CD8-positive, alpha-beta T cell (primary cell): ENCODE measurements at regions of chr16 and their contacts with region 1.

Region 1: DNA sequence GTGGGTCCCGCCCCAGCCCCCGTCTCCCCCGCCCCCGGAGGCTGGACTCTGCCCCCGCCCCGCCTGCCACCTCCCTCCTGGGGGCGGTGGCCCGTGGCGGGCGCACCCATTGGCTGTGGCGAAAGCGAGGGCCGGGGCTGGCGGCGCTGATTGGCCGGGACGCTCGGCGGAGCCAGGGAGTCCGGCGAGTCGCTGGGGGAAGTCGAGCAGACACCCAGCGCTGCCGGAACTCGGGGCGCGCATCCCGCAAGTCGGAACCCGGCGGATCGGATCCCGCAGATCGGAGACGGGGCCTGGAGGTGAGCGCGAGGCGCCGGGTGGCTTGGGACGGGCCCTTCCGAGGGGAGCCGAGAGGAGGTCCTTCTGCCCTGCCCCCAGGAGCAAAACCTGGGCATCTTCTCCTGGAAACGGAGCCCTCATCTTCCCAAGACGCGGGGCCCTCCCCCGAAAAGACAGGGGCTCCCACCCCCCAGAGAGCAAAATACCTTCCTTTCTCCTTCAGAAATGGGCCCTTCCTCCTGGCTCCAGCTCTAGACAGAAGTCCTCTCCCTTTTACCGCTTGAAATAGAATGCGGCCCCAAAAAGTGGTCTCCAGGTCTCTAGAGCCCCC is at the start of gene ABAT:
- DNase-seq: peak; percentile 74 to 93 (median 88)
- ATAC-seq: peak; percentile 96
- H3K4me3 ChIP-seq: peak within 1 kb of the TSS; percentile 58 to 75
- H3K4me3 Mint-ChIP-seq: peak within 1 kb of the TSS; percentile 89
- H3K27ac ChIP-seq: peak within 1 kb of the TSS in 1 of 2 experiments; percentile 37
- H3K27ac Mint-ChIP-seq: peak within 1 kb of the TSS; percentile 90
- H3K4me1 ChIP-seq: peaks cover 16% of the 10 kb centered on the region
- H3K4me1 Mint-ChIP-seq: peaks cover 19% of the 10 kb centered on the region
- H3K27me3 ChIP-seq: no peaks in the 10 kb centered on the region
- H3K27me3 Mint-ChIP-seq: no peaks in the 10 kb centered on the region
- CTCF ChIP-seq: no peak
- total RNA-seq, gene ABAT: 4.1 to 4.2 TPM

Region 2: DNA sequence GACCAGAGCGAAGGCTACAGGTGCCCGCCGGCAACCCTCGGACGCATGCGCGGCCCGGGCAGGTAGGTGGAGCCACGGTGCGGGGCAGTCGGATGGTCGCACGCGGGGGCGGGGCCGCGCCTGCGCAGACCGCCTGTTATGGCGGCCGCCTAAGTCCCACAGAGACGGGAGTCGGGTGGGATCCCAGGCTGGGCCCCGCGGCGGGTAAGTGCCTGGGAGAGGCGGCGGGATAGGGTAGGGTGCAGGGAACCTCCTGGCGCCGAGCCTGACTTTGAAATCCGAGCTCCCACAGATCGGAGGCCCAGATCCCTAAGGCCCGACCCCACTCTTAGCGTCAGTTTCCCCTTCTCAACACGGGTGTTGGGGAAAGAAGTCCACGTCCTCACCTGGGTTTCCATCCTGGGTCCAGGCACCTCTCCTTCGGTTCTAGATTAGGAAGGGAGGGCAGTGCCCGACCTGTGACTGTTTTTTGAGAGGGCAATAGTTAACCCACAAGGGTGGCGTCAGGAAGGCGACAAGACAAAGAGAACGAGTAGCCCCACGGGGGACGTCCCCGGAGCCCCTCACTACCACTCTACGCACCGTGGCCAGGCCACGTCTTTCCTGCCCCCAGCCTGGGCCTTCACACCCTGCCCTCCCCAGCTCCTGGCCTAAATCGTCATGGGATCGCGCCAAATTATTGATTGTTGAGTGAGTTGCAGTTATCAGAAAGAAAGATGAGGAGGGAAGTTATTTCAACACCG is 52.8 kb before region 1 on chr16 and contains the start of gene METTL22:
- CTCF ChIA-PET with region 1: no interaction called
- POLR2A ChIA-PET with region 1: no interaction called
- intact Hi-C with region 1: loop called (anchors 1 kb)
- DNase-seq: peak; percentile 83 to 96 (median 91)
- ATAC-seq: peak; percentile 98
- H3K4me3 ChIP-seq: peak within 1 kb of the TSS; percentile 90 to 100
- H3K4me3 Mint-ChIP-seq: peak within 1 kb of the TSS; percentile 94
- H3K27ac ChIP-seq: peak within 1 kb of the TSS; percentile 83 to 84
- H3K27ac Mint-ChIP-seq: peak within 1 kb of the TSS; percentile 92
- H3K4me1 ChIP-seq: peaks cover 11% of the 10 kb centered on the region
- H3K4me1 Mint-ChIP-seq: peaks cover 20% of the 10 kb centered on the region
- H3K27me3 ChIP-seq: no peaks in the 10 kb centered on the region
- H3K27me3 Mint-ChIP-seq: no peaks in the 10 kb centered on the region
- CTCF ChIP-seq: no peak
- total RNA-seq, gene METTL22: 30.0 to 30.8 TPM

Region 3: DNA sequence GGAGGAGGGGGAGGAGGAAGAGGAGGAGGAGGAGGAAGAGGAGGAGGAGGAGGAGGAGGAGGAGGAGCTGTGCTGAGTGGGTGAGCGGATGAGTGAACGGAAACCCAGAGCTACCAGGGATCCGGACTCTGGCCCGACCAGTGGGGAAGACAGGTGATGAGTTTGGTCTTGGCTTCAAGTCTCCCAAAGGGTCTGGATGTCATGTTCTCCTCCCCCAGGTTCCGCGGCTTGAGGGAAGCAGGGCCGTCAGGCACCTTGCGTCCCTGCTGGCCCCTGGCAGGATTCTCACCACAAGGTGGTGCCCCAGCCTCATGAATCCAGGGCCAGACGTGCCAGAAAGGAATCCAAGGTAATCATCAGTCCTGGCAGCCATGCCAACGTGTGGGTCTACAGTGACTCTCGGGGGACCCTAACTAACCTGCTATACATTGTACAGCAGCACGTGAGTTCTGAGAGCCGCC is 13.6 kb before region 1 on chr16:
- CTCF ChIA-PET with region 1: no interaction called
- POLR2A ChIA-PET with region 1: no interaction called
- intact Hi-C with region 1: no loop called
- DNase-seq: peak in 8 of 9 experiments; percentile 10 to 56 (median 32)
- ATAC-seq: peak; percentile 58
- H3K4me3 ChIP-seq: no peak overlapping the region
- H3K4me3 Mint-ChIP-seq: no peak overlapping the region
- H3K27ac ChIP-seq: no peak overlapping the region
- H3K27ac Mint-ChIP-seq: no peak overlapping the region
- H3K4me1 ChIP-seq: no peaks in the 10 kb centered on the region
- H3K4me1 Mint-ChIP-seq: no peaks in the 10 kb centered on the region
- H3K27me3 ChIP-seq: no peaks in the 10 kb centered on the region
- H3K27me3 Mint-ChIP-seq: no peaks in the 10 kb centered on the region
- CTCF ChIP-seq: peak; percentile 27

Region 4: DNA sequence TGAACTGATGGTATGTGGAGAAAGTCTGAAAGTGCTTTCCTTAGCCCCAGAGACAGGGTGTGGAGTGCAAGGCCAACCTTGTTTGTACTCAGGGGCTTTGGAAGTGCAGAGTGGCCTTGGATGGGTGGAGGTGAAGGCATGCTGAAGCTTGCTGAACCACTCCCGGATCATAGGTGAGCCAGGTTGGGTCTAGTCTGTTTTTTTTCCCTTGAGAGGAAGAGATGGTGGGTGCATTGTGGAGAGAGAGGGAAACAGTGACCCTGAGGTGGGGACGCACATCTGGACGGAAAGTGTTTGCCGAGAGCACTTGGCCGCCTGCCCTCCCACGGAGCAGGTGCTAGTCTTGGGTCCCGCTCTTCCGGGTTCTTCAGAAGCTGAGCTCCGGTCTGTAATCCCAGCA is 12.4 kb after region 1 on chr16:
- CTCF ChIA-PET with region 1: no interaction called
- POLR2A ChIA-PET with region 1: no interaction called
- intact Hi-C with region 1: no loop called
- DNase-seq: no peak
- ATAC-seq: no peak
- H3K4me3 ChIP-seq: no peak overlapping the region
- H3K4me3 Mint-ChIP-seq: no peak overlapping the region
- H3K27ac ChIP-seq: no peak overlapping the region
- H3K27ac Mint-ChIP-seq: no peak overlapping the region
- H3K4me1 ChIP-seq: no peaks in the 10 kb centered on the region
- H3K4me1 Mint-ChIP-seq: no peaks in the 10 kb centered on the region
- H3K27me3 ChIP-seq: no peaks in the 10 kb centered on the region
- H3K27me3 Mint-ChIP-seq: no peaks in the 10 kb centered on the region
- CTCF ChIP-seq: no peak

Region 5: DNA sequence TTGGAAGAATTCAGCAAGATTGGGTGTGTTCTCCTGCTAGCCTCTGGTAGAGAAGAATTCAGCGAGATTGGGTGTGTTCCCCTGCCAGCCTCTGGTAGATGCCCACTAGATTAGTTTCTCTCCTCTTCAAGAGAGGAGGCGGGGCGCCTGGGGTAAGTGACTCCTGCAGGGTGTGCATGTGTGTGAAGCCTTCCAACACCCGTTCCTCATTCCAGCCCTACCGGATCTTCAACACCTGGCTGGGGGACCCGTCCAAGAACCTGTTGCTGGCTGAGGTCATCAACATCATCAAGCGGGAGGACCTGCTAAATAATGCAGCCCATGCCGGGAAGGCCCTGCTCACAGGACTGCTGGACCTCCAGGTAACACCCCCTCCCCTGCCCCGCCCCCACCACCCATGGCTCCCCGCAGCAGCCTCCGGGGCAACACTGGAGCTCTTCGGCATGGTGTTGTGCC is 101.6 kb after region 1 on chr16:
- CTCF ChIA-PET with region 1: no interaction called
- POLR2A ChIA-PET with region 1: no interaction called
- intact Hi-C with region 1: no loop called
- DNase-seq: no peak
- ATAC-seq: no peak
- H3K4me3 ChIP-seq: no peak overlapping the region
- H3K4me3 Mint-ChIP-seq: no peak overlapping the region
- H3K27ac ChIP-seq: no peak overlapping the region
- H3K27ac Mint-ChIP-seq: no peak overlapping the region
- H3K4me1 ChIP-seq: no peaks in the 10 kb centered on the region
- H3K4me1 Mint-ChIP-seq: no peaks in the 10 kb centered on the region
- H3K27me3 ChIP-seq: no peaks in the 10 kb centered on the region
- H3K27me3 Mint-ChIP-seq: no peaks in the 10 kb centered on the region
- CTCF ChIP-seq: no peak

Region 6: DNA sequence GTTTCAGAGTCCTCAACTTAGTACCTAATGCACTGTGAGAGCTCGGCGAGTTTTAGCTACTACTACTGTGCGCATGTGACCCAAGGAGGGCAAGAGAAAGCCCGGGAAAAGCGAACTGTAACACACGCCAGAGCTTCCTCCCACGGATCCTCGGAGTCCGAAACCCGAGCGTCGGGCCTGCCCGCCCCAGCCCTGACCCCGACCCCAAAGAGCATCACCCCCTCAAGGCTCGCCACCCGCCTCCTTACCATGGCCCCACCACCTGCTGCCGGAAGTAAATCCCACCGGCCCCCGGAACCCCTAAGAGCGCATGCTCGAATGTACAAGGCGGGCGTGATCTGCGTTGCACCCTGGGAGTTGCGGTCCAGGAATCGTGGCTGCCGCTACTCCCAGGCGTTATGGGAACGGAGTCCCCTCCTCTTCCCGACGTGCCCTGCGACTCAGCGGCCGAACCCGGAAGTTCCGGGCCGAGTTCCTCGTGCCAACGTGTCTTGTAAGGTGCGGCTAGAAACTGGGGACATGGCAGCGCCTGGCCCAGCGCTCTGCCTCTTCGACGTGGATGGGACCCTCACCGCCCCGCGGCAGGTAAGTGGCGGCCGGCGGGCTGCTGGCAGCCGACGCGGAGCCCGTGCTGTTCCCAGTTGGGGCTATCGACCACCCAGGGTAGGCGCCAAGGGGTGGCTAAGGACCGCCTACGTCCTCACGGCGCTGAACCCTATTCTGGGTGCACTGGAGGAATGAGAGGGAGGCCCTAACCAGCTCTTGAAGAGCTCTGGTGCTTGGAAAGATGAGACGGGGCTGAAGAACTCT is 123.1 kb after region 1 on chr16 and contains the starts of genes PMM2 and TMEM186:
- CTCF ChIA-PET with region 1: no interaction called
- POLR2A ChIA-PET with region 1: no interaction called
- intact Hi-C with region 1: loop called (anchors 1 kb)
- DNase-seq: peak; percentile 87 to 98 (median 95)
- ATAC-seq: peak; percentile 95
- H3K4me3 ChIP-seq: peak within 1 kb of the TSS; percentile 77 to 97
- H3K4me3 Mint-ChIP-seq: peak within 1 kb of the TSS; percentile 95
- H3K27ac ChIP-seq: peak within 1 kb of the TSS; percentile 78 to 81
- H3K27ac Mint-ChIP-seq: peak within 1 kb of the TSS; percentile 93
- H3K4me1 ChIP-seq: peaks cover 34% of the 10 kb centered on the region
- H3K4me1 Mint-ChIP-seq: peaks cover 46% of the 10 kb centered on the region
- H3K27me3 ChIP-seq: no peaks in the 10 kb centered on the region
- H3K27me3 Mint-ChIP-seq: no peaks in the 10 kb centered on the region
- CTCF ChIP-seq: no peak
- total RNA-seq, gene PMM2: 29.6 to 32.7 TPM
- total RNA-seq, gene TMEM186: 2.4 to 2.9 TPM

Region 7: DNA sequence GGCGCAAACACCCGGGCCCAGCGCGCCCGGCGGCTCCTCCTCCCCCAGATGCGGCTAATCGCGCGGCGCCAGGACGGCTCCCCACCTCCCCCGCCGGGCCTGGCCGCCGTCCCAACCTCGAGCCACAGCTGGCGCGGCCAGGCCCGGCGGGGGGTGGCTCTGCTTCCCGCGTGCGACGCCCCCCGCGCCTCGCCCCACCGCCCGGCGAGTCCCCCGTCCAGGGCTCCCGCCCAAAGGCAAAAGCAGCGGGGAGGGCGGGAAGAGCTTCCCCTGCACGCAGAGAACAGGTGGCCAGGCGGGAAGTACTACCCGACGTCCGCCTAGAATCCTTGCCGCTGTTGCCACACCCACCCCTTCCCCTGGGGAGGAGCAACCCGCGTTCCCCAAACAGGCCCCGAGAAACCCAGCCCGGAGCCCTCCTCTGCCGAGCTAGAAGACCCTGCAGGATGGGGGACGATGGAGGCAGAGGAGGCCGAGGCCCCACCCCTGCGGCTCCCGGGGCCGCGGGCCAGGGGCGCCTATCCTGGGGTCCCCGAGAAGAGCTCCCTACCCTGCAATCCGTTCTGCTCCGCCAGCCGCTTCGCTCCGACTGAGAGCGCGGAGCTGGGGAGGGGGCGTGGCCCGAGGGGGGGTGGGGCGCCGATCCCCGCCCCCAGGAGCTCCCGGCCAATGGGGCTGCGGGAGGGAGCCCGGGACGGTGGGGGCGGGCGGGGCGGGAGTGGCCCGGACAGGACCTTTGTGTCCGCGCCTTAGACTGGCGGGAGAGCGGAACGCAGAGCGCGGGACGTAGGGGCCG is 194.1 kb after region 1 on chr16 and contains the start of gene CARHSP1:
- CTCF ChIA-PET with region 1: no interaction called
- POLR2A ChIA-PET with region 1: no interaction called
- intact Hi-C with region 1: loop called (anchors 1 to 2 kb)
- DNase-seq: peak; percentile 55 to 90 (median 75)
- ATAC-seq: peak; percentile 76
- H3K4me3 ChIP-seq: peak within 1 kb of the TSS; percentile 68 to 72
- H3K4me3 Mint-ChIP-seq: peak within 1 kb of the TSS; percentile 97
- H3K27ac ChIP-seq: peak within 1 kb of the TSS; percentile 41 to 52
- H3K27ac Mint-ChIP-seq: peak within 1 kb of the TSS; percentile 93
- H3K4me1 ChIP-seq: peaks cover 53% of the 10 kb centered on the region
- H3K4me1 Mint-ChIP-seq: peaks cover 57% of the 10 kb centered on the region
- H3K27me3 ChIP-seq: no peaks in the 10 kb centered on the region
- H3K27me3 Mint-ChIP-seq: no peaks in the 10 kb centered on the region
- CTCF ChIP-seq: no peak
- total RNA-seq, gene CARHSP1: 28.0 to 33.3 TPM

Region 8: DNA sequence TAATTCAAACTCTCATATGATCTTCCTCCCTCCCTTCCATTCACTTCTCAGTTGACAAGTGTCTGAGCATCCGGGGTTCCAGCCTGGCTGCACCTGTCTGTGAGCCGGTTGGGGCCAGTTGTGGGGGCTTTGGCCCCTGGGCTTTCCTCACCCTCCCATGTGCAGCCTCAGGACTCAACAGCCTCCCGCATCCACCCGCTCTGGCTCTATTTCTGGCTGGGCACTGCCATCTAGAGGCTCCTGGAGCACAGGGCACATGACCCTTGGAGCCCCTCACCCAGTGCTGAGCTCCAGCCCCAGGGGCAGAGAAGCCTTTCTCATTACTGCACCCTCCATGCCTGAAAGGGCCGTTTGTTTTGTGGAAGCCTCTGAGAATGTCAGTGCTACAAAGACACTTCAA is 460.2 kb after region 1 on chr16:
- CTCF ChIA-PET with region 1: no interaction called
- POLR2A ChIA-PET with region 1: no interaction called
- intact Hi-C with region 1: loop called in 1 of 2 experiments (anchors 5 kb)
- DNase-seq: peak; percentile 32 to 76 (median 64)
- ATAC-seq: peak; percentile 80
- H3K4me3 ChIP-seq: no peak overlapping the region
- H3K4me3 Mint-ChIP-seq: no peak overlapping the region
- H3K27ac ChIP-seq: no peak overlapping the region
- H3K27ac Mint-ChIP-seq: peak overlapping the region; percentile 55
- H3K4me1 ChIP-seq: peaks cover 13% of the 10 kb centered on the region
- H3K4me1 Mint-ChIP-seq: peaks cover 20% of the 10 kb centered on the region
- H3K27me3 ChIP-seq: no peaks in the 10 kb centered on the region
- H3K27me3 Mint-ChIP-seq: no peaks in the 10 kb centered on the region
- CTCF ChIP-seq: peak; percentile 68